Aorta (tissue), 5 donors: ENCODE measurements at regions of chr1 and their contacts with region 1.

Region 1: GRCh38 chr1:168572633-168573032 is 3.8 kb upstream of the XCL1 start:
- DNase-seq: no peak
- ATAC-seq: no peak
- H3K4me3 ChIP-seq: no peak overlapping the region
- H3K27ac ChIP-seq: no peak overlapping the region
- H3K4me1 ChIP-seq: no peaks in the 10 kb centered on the region
- H3K27me3 ChIP-seq: no peaks in the 10 kb centered on the region

Region 2: DNA sequence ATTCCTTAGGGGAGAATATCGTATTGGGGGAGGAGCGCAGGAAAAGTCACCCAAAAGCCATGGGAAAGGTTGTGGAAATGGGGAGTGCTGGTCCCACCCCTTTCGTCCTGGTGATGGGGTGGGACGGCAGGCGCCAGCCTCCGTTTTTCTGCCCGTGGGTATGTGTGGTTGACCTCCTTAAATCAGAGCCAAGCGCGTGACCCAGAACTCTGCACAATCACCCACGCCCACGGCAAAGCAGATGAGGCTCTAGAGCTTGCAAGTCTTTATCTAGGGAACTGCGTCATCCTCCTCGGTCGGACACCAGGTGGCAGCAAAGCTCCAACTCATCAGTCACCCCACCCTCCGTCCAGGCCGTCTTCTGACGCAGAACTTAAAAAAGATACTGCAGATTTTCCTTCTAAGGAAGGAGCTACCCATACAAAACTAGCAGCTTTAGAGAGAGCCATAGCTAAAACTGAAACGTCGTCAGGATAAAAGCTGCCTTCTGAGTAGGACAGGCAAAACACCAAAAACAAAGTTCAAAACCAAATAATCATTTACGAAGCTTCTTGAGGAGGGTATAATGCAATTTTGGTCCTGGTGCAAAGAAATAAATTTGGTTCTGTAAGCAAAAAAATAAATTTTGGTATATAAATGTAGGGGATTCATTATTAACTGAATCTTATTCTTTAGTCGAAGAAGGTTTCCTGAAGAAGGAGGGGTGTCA is 229.9 kb before region 1 on chr1:
- intact Hi-C with region 1: loop called in 1 of 2 experiments (anchors 10 kb)
- DNase-seq: peak; percentile 92 to 93
- ATAC-seq: peak; percentile 96
- H3K4me3 ChIP-seq: no peak overlapping the region
- H3K27ac ChIP-seq: peak overlapping the region; percentile 0 to 19
- H3K4me1 ChIP-seq: no peaks in the 10 kb centered on the region
- H3K27me3 ChIP-seq: no peaks in the 10 kb centered on the region

Region 3: DNA sequence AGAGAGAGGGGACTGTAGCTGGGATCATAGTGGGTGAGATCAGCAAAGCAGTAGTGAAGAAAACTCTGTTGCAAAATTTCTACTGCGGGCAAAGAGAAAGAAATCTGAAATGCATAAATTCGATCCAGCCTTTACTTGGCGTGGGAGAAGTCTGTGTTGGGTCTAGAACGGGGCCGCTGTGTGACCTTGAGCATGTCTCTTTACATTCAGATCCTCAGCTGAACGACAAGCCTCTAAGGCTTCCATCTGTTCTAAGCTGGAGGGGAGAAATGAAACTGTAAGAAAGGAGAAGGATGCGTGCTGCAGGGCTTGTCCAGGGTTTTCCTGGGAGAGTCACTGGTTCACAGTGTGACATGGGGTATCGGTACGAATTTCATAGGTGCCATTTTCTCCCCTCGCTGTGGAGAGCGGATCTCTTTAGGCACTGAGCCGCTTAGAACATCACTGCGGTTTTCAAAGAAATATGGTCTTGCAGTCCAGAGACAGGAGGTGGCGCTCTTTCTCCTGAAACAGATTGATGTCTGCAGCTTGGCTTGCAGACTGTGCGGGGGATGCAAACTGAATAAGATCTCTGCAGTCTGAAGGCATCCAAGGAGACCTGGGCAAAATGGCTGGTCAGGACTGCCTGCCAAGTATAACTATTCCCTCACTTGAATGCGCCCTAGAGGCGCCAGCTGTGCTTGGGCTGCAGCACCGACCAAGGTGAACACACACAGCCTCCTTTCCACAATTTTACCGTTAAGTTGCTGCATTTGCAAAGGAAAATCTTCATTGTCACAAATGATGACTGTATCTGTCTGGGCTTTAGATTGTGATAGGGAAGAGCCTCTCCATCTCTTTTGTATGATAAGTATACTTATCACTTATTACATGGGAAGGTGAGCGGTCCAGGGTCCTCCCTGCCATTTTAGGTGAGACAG is 132.9 kb before region 1 on chr1:
- intact Hi-C with region 1: loop called in 1 of 2 experiments (anchors 2 kb)
- DNase-seq: peak in 1 of 2 donors; percentile 81
- ATAC-seq: peak; percentile 82
- H3K4me3 ChIP-seq: no peak overlapping the region
- H3K27ac ChIP-seq: no peak overlapping the region
- H3K4me1 ChIP-seq: no peaks in the 10 kb centered on the region
- H3K27me3 ChIP-seq: no peaks in the 10 kb centered on the region

Region 4: GRCh38 chr1:168598974-168599373 is 26.3 kb after region 1 on chr1:
- intact Hi-C with region 1: no loop called
- DNase-seq: no peak
- ATAC-seq: no peak
- H3K4me3 ChIP-seq: no peak overlapping the region
- H3K27ac ChIP-seq: no peak overlapping the region
- H3K4me1 ChIP-seq: peaks cover 0 to 2% of the 10 kb centered on the region in 2 donors
- H3K27me3 ChIP-seq: no peaks in the 10 kb centered on the region

Region 5: DNA sequence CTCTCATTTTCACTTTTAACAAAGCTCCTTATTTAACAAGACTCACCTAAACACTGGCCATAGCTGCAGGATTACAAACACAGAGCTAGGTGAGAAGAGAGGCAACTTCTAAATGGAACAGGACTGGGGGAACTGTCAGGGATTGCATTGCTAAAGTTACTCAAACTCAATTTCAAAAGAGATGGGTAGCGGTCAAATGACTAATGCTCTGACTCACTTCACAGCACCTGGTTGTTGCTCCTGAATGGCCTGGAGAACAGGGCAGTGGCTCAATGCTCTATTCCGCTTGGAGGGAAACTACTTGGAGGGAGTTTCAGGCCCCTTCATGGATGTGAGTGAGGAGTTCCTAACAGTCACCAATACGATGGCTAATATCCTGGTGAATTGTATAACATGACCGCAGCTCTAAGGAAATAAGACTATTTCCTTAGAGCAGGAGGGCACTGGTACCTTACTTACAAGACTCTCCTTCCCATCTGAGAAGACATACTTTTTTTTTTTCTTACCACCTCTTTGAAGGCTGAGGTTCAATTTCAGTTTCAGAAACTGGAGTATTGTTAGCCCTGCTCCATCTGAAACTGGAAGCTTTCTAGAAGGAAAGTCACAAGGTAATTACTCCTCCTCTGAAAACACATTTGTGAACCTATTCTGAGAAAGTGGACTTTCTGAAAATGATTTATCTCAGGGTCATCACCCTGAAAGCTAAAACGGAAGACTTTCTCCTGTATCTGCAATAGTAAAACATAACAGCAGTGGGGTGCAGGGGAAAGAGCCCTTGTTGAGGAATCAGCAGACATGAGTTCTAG is 146.9 kb after region 1 on chr1:
- intact Hi-C with region 1: no loop called
- DNase-seq: no peak
- ATAC-seq: no peak
- H3K4me3 ChIP-seq: no peak overlapping the region
- H3K27ac ChIP-seq: no peak overlapping the region
- H3K4me1 ChIP-seq: no peaks in the 10 kb centered on the region
- H3K27me3 ChIP-seq: no peaks in the 10 kb centered on the region